Dorsolateral prefrontal cortex (tissue), 120 donors: ENCODE measurements at regions of chr16 and their contacts with region 1.

Region 1: DNA sequence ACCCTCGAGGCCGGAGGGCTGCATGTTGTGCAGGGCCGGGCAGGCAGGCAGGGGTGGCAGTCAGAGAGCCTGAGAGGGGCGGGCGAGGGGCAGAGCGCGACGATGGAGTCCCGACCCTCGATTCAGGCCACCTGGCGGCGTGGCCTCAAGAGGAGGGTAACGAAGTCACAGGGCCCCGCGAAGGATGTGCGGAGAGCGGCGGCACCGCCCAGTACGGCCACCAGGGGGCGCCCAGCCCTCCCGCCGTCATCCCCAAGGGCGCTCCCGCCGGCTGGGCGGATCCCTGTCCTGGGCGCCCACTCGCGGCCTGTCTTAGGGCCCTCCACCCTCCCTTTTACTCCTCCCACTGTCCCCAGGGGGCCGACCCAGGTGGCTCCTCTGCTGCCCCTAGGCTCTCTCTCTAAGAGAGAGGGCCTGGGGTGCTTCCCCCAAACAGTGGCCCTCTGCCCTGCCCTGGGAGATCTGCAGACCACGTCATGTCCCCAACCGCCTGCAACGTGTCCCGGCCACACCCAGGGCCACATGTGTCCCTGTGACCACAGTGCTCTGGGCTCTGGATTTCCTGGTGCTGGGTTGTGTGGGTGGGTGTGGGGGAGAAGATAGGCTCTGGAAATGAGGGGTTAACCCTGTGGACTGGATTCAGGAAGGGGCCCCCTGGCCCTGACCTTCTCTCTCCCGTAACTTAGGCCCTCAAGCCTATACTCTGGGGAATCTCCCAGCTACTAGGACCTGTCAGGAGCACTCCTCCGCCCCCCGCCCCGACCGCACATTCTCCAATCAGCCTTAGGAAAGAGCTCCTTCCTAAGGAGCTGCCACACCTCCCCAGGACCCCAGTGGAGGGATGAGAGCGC is 5.9 kb downstream of the DPEP2 start:
- DNase-seq: peak; percentile 34 to 85 (median 57)
- H3K4me3 ChIP-seq: peak overlapping the region; percentile 26 to 69 (median 46)
- H3K27ac ChIP-seq: peak overlapping the region in 39 of 59 donors; percentile 9 to 90 (median 59)
- H3K27me3 ChIP-seq: no peaks in the 10 kb centered on the region
- CTCF ChIP-seq: peak; percentile 15 to 99 (median 98)

Region 2: GRCh38 chr16:67816240-67817031 is 177.0 kb before region 1 on chr16:
- intact Hi-C with region 1: no loop called
- DNase-seq: peak; percentile 52 to 87 (median 70)
- H3K4me3 ChIP-seq: peak overlapping the region in 13 of 59 donors; percentile 2 to 40 (median 20)
- H3K27ac ChIP-seq: peak overlapping the region in 6 of 59 donors; percentile 9 to 62 (median 40)
- H3K27me3 ChIP-seq: no peaks in the 10 kb centered on the region
- CTCF ChIP-seq: peak; percentile 92 to 100 (median 100)

Region 3: DNA sequence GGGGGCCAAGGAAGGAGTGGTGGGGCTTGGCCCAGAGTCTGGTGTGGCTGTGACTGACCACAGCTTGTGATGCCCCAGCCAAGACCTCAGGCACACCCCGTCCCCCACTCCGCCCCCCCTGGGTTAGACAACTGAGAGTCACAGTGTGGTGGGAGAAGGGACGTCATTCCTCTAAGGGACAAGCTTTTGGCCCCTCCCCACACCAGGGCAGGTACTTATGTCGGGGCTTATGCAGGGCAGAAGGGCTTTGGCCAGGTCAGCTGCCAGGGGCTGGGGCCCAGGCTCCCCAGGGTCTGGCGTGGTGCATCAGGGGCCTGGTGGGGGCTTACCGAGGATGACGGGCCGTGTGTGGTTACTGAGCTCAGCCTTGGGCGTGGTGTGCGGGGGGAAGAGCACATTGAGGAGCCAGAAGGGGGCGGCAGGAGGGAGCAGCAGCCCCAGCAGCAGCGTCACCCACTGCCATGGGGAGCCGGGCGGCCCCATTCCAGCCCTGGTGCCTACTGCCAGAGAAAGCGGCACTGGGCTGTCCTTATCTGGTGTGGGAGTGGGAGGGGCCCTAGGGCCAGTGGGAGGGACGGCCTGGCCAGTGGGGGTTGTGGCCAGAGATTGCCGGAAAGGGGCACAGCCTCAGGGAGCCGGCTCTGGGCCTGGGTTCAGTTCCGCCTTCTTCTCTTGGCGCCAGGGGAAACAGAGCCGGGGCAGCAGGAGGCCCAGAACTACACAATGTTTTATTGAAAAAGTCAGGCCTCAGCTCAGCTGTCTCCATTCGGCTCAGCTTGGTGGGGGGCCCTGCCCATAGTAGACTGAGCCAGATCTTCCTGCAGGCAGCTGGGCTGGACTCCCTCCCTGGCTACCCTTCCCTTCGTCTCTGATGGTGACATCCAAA is 49.6 kb before region 1 on chr16 and contains the start of gene LCAT:
- intact Hi-C with region 1: loop called (anchors 2 to 5 kb)
- DNase-seq: peak; percentile 61 to 85 (median 82)
- H3K4me3 ChIP-seq: peak within 1 kb of the TSS in 43 of 59 donors; percentile 4 to 45 (median 22)
- H3K27ac ChIP-seq: peak within 1 kb of the TSS; percentile 16 to 97 (median 90)
- H3K27me3 ChIP-seq: no peaks in the 10 kb centered on the region
- CTCF ChIP-seq: peak in 22 of 56 donors; percentile 4 to 38 (median 18)
- total RNA-seq, gene LCAT: 5.4 to 42.1 (median 16.4) TPM

Region 4: DNA sequence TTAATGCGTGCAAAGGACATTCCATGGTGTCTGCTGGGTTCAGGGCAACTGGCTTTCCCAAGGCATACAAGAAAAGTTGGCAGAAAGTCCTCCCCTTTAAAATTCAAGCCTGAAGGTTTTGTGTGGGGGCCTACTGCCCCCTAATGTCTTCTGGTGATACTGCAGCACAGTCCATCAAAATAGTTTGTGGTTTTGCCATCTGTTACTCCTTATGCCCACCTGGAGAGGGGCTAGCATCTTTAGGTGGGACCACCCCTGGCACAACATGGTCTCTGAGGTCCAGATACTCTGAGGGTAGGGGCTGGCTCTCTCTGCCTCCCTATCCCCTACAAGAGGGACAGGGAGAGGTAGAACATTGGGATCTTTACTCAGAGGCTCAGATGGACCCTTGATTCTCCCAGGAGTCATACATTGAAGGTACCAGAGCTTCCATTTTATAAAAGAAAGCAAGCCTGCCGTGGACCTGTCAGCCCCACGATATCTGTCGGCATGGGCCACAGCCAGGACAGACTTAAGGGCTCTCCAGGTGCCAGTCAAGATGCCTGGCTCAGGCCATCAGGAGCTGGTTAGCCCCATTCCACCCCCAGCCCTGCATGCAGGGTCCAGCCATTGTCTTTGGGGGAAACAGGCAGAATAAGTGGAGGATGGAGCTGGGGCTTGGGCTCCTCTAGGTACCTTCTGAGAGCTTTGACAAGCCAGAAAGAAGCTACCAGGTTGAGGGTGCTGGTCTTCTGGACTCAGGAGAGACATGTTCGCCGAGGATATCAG is 236.2 kb after region 1 on chr16:
- intact Hi-C with region 1: loop called in 1 of 2 experiments (anchors 5 kb)
- DNase-seq: peak in 5 of 10 donors; percentile 8 to 58 (median 44)
- H3K4me3 ChIP-seq: no peak overlapping the region
- H3K27ac ChIP-seq: peak overlapping the region in 19 of 59 donors; percentile 6 to 65 (median 38)
- H3K27me3 ChIP-seq: no peaks in the 10 kb centered on the region
- CTCF ChIP-seq: peak; percentile 77 to 96 (median 91)